Activated B cell treated with CpG ODN at 0.5 μM for 24 hours (primary cell): ENCODE measurements at regions of chr2 and their contacts with region 1.

Region 1: GRCh38 chr2:61538200-61538919 is at the start of gene XPO1:
- DNase-seq: peak; percentile 96
- ATAC-seq: peak; percentile 77
- H3K4me3 Mint-ChIP-seq: peak within 1 kb of the TSS; percentile 90
- H3K27ac Mint-ChIP-seq: peak within 1 kb of the TSS; percentile 100
- H3K4me1 Mint-ChIP-seq: peaks cover 39% of the 10 kb centered on the region
- H3K27me3 Mint-ChIP-seq: no peaks in the 10 kb centered on the region
- CTCF ChIP-seq: no peak
- total RNA-seq, gene XPO1: 183 and 217 TPM in 2 replicates

Region 2: DNA sequence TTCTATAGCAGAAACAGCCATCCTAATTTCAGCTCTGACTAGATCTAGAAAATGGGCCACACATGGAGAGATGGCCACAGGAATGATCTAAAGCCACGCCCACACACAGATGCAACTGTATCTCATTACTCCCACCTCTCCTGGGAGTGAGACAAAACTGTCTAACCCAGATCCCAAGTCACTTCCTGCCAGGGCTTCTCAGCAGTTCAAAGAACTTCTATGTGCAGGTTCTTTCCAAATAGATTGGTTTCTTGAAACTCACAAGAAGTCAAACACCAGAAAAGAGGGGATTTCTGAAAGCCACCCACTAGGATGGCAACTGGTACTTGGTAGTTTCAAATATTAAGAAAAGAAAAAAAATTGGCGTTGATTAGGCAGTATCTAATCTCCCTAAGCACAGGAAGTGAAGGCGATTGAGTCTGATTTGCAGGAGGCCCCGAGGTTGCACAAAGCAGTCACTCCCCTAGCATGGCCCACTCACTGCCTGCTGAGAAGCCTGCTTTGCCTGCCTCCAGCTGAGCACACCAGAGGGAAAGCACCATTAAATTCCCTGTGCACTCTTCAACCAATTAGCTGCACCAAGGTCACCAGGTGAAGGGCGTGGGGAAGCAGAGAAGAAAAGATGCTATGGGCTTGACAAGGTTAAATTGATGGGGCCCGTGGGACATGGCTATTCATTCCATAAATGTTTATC is 731.2 kb before region 1 on chr2:
- CTCF ChIA-PET with region 1: no interaction called
- POLR2A ChIA-PET with region 1: interaction called, 10 read pairs
- intact Hi-C with region 1: no loop called
- DNase-seq: peak; percentile 34
- ATAC-seq: peak; percentile 93
- H3K4me3 Mint-ChIP-seq: peak overlapping the region; percentile 59
- H3K27ac Mint-ChIP-seq: peak overlapping the region; percentile 93
- H3K4me1 Mint-ChIP-seq: peaks cover 54% of the 10 kb centered on the region
- H3K27me3 Mint-ChIP-seq: no peaks in the 10 kb centered on the region
- CTCF ChIP-seq: no peak

Region 3: GRCh38 chr2:61144697-61145268 is 393.6 kb before region 1 on chr2:
- CTCF ChIA-PET with region 1: no interaction called
- POLR2A ChIA-PET with region 1: interaction called, 11 read pairs
- intact Hi-C with region 1: no loop called
- DNase-seq: peak; percentile 82
- ATAC-seq: peak; percentile 93
- H3K4me3 Mint-ChIP-seq: peak overlapping the region; percentile 97
- H3K27ac Mint-ChIP-seq: peak overlapping the region; percentile 97
- H3K4me1 Mint-ChIP-seq: peaks cover 9% of the 10 kb centered on the region
- H3K27me3 Mint-ChIP-seq: no peaks in the 10 kb centered on the region
- CTCF ChIP-seq: no peak

Region 4: GRCh38 chr2:61470965-61471904 is 67.1 kb before region 1 on chr2 and contains the start of gene USP34:
- CTCF ChIA-PET with region 1: no interaction called
- POLR2A ChIA-PET with region 1: interaction called, 21 read pairs
- intact Hi-C with region 1: loop called (anchors 1 kb)
- DNase-seq: peak; percentile 79
- ATAC-seq: peak; percentile 82
- H3K4me3 Mint-ChIP-seq: peak within 1 kb of the TSS; percentile 95
- H3K27ac Mint-ChIP-seq: peak within 1 kb of the TSS; percentile 95
- H3K4me1 Mint-ChIP-seq: peaks cover 38% of the 10 kb centered on the region
- H3K27me3 Mint-ChIP-seq: no peaks in the 10 kb centered on the region
- CTCF ChIP-seq: no peak
- total RNA-seq, gene USP34: 142 and 176 TPM in 2 replicates

Region 5: DNA sequence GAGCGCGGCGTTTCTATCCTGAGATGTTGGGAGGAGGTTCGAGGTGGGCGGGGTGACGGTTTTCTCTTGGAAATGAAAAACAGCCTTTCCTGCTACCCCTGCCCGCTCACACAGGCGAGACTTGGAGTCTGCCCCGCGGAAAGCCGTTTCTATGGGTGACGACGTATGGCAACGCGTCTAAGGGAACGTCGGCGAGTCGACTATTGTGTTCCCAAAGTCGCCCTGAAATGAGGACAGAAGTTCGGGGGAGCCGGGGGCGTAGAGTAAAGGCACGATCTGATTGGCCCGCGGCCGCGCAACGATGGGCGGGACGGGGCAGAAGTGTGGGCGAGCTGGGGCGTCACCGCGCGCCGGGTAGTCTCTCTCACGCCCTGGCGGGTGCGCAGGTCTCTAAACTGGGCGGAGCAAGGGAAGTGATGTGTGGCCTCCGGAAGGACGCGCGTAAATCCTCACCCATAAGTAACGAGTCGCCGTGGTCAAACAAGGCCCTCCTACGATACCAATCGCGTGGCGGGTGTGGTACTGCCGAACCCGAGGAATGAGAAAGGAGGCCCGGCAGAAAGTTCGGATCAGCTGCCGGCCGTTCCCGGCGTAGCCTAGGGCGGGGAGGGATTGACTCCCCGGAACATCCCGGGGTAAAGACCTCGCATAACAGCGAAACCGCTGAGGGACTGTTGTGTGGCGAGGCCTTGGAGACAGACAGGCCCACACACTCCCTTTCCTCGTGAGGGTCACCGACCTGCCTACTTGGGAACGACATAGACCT is 225.9 kb after region 1 on chr2:
- CTCF ChIA-PET with region 1: no interaction called
- POLR2A ChIA-PET with region 1: interaction called, 25 read pairs
- intact Hi-C with region 1: loop called (anchors 1 kb)
- DNase-seq: peak; percentile 88
- ATAC-seq: peak; percentile 98
- H3K4me3 Mint-ChIP-seq: peak overlapping the region; percentile 95
- H3K27ac Mint-ChIP-seq: peak overlapping the region; percentile 94
- H3K4me1 Mint-ChIP-seq: peaks cover 16% of the 10 kb centered on the region
- H3K27me3 Mint-ChIP-seq: no peaks in the 10 kb centered on the region
- CTCF ChIP-seq: no peak

Region 6: GRCh38 chr2:61905372-61906185 is 367.2 kb after region 1 on chr2 and contains the start of gene COMMD1:
- CTCF ChIA-PET with region 1: no interaction called
- POLR2A ChIA-PET with region 1: interaction called, 9 read pairs
- intact Hi-C with region 1: loop called (anchors 1 kb)
- DNase-seq: peak; percentile 78
- ATAC-seq: peak; percentile 100
- H3K4me3 Mint-ChIP-seq: peak within 1 kb of the TSS; percentile 97
- H3K27ac Mint-ChIP-seq: peak within 1 kb of the TSS; percentile 86
- H3K4me1 Mint-ChIP-seq: peaks cover 11% of the 10 kb centered on the region
- H3K27me3 Mint-ChIP-seq: no peaks in the 10 kb centered on the region
- CTCF ChIP-seq: no peak
- total RNA-seq, gene COMMD1: 36.8 and 37.1 TPM in 2 replicates